AG04449 (cell line): ENCODE measurements at regions of chr2 and their contacts with region 1.

Region 1: GRCh38 chr2:172465417-172466334 is 38.3 kb downstream of the ITGA6 start:
- DNase-seq: peak; percentile 56
- H3K4me3 ChIP-seq: peak overlapping the region; percentile 52
- CTCF ChIP-seq: peak; percentile 73

Region 2: DNA sequence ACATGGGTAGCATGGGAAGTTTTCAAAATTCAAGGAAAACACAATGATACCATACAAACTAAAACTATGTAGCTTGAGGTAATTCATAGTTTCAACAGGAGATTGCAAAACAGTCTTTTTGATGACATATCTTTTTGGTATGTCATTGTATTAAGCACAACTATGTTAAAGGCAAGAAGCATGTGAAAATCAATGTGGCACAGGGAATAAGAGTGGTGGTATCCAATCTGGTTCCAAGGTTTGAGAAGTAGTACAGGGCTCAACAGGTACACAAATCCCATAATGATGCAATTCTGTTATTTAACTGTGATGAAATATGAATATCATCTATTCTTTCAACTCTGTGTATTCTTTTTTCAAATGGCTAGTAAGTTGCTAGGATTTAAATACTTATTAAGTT is 346.6 kb before region 1 on chr2:
- CTCF ChIA-PET with region 1: interaction called, 12 read pairs
- POLR2A ChIA-PET with region 1: no interaction called
- DNase-seq: no peak
- H3K4me3 ChIP-seq: no peak overlapping the region
- CTCF ChIP-seq: no peak

Region 3: GRCh38 chr2:172172513-172173173 is 293.0 kb before region 1 on chr2:
- CTCF ChIA-PET with region 1: interaction called, 662 read pairs
- POLR2A ChIA-PET with region 1: interaction called, 3 read pairs
- DNase-seq: no peak
- H3K4me3 ChIP-seq: peak overlapping the region; percentile 70
- CTCF ChIP-seq: peak; percentile 91

Region 4: GRCh38 chr2:172234716-172235691 is 230.7 kb before region 1 on chr2:
- CTCF ChIA-PET with region 1: interaction called, 18 read pairs
- POLR2A ChIA-PET with region 1: interaction called, 5 read pairs
- DNase-seq: no peak
- H3K4me3 ChIP-seq: peak overlapping the region; percentile 53
- CTCF ChIP-seq: no peak

Region 5: GRCh38 chr2:172285010-172285621 is 180.6 kb before region 1 on chr2:
- CTCF ChIA-PET with region 1: interaction called, 66 read pairs
- POLR2A ChIA-PET with region 1: no interaction called
- DNase-seq: peak; percentile 59
- H3K4me3 ChIP-seq: no peak overlapping the region
- CTCF ChIP-seq: no peak

Region 6: DNA sequence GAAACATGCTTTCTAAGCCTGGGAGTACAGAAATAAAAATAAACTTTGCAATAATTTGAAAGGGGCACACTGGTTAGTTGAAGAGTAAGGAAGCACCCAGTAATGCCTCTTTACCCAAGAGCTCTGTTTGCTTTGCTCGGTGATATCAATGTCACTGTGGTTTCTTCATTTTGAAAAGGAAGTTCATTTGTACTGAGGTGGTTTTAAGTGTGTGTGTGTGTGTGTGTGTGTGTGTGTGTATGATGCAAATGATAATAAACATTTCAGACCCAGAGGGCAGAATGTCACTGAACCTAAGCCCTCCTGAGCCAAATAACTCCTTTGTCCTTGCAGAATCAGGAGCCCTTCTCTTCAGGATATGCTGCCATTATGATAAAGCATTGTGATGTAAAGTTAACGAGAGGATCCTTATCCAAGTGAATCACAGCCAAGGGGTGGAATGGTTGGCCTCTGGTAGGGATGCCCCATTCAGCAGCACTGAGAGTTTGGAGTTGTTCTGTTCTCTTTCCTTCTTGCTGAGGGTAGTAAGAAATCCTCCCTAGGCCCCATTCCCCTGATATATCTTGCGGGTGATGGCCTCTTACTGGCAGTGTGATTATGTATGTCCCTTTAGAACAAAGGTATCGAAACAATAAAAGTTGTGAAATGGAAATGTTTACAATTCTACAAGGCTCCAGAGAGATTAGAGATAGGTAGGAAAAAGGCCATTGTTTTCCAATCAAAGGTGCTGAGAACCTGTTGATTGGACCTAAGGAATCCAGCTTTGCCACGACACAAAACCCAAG is 30.7 kb before region 1 on chr2:
- CTCF ChIA-PET with region 1: interaction called, 226 read pairs
- POLR2A ChIA-PET with region 1: no interaction called
- DNase-seq: no peak
- H3K4me3 ChIP-seq: no peak overlapping the region
- CTCF ChIP-seq: no peak